ENCODE measurements at regions of chr1 and their contacts with region 1.

Region 1: DNA sequence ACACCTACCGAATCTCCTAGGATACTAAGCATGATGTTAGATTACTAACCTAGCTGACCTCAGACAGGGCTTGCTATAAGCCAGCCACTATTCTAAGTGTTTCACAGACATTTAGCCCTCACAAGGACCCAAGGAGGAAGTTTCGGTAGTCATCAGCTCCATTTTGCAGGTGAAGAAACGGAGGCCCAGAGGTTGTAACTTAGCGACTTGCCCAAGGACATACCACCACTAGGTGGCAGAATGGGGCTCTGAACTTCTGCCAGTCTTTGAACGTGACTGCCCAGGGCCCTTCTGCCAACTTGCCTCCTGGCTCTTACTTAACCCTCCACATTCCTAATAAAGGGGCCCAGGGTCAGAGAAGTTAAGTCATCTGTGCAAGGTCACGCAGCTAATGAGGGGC is 283.5 kb downstream of the C1orf94 start:
- DNase-seq: no peak
- ATAC-seq: no peak
- H3K4me3 Mint-ChIP-seq: no peak overlapping the region
- H3K27ac Mint-ChIP-seq: no peak overlapping the region
- H3K4me1 Mint-ChIP-seq: no peaks in the 10 kb centered on the region
- H3K27me3 Mint-ChIP-seq: peaks cover 2% of the 10 kb centered on the region
- CTCF ChIP-seq: no peak

Region 2: DNA sequence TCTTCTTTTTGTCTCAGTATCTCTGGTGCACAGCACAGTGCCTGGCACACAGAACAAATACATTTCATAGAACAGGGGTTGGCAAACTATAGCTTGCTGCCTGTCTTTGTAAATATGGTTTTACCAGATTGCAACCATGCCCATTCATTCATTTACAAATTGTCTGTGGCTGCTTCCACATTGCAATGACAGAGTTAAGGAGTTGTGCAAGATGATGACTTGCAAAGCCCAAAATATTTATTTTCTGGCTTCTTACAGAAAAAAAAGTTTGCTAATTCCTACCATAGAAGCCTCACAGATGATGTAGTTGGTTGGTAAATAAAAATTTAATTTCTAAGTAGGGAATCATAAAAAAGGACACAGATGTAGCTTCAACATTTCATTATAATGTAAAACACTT is 607.5 kb before region 1 on chr1:
- CTCF ChIA-PET with region 1: no interaction called
- POLR2A ChIA-PET with region 1: no interaction called
- intact Hi-C with region 1: no loop called
- DNase-seq: no peak
- ATAC-seq: no peak
- H3K4me3 Mint-ChIP-seq: no peak overlapping the region
- H3K27ac Mint-ChIP-seq: no peak overlapping the region
- H3K4me1 Mint-ChIP-seq: no peaks in the 10 kb centered on the region
- H3K27me3 Mint-ChIP-seq: peaks cover 5% of the 10 kb centered on the region
- CTCF ChIP-seq: no peak

Region 3: GRCh38 chr1:34426325-34426891 is 33.8 kb before region 1 on chr1:
- CTCF ChIA-PET with region 1: no interaction called
- POLR2A ChIA-PET with region 1: no interaction called
- intact Hi-C with region 1: no loop called
- DNase-seq: no peak
- ATAC-seq: no peak
- H3K4me3 Mint-ChIP-seq: no peak overlapping the region
- H3K27ac Mint-ChIP-seq: no peak overlapping the region
- H3K4me1 Mint-ChIP-seq: no peaks in the 10 kb centered on the region
- H3K27me3 Mint-ChIP-seq: peaks cover 10% of the 10 kb centered on the region
- CTCF ChIP-seq: no peak

Region 4: DNA sequence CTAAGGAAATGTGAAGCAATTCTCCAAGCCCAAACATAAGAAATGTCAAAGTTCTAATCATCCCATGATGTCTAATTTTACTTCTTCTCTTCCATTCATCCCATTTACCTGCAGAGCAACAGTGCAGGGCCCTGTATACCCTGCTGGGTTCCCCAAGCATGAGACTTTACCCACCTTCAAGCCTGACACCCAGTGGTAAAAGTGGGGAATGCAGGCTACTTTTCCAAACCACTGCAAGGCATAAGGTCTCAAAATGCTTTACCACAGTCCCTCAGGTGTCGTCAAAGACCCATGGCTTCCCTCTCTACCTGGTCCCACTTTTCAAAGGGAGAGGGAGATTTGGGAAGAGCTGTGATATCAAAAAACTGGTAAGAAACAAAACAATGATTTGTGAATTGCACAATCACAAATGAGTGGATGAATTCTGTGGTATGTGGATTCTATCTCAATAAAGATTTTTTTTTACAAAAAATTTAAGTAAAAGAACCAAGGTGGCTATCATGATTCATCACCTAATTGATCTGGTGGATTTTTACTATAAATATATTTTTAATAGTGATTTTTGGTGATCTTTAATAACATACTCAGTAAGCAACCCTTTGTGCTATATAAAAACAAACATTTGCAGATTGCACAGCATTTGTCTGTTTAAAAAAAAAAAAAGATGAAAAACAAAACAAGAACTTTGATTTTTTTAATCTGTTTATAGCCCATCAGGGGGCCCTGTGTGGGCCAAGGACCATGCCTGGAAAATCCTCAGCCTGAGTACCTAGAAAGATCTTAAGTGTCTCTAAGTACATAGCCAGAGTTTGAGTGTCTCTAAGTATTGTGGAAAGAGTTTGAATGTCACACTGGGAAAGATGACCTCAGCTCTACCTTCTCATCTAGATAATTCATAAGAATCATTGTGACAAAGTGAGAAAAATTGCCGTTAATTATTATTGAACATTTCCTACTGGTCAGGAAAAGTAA is 221.6 kb after region 1 on chr1:
- CTCF ChIA-PET with region 1: no interaction called
- POLR2A ChIA-PET with region 1: no interaction called
- intact Hi-C with region 1: loop called (anchors 2 kb)
- DNase-seq: no peak
- ATAC-seq: no peak
- H3K4me3 Mint-ChIP-seq: no peak overlapping the region
- H3K27ac Mint-ChIP-seq: no peak overlapping the region
- H3K4me1 Mint-ChIP-seq: no peaks in the 10 kb centered on the region
- H3K27me3 Mint-ChIP-seq: peaks cover 9% of the 10 kb centered on the region
- CTCF ChIP-seq: peak; percentile 21

Region 5: DNA sequence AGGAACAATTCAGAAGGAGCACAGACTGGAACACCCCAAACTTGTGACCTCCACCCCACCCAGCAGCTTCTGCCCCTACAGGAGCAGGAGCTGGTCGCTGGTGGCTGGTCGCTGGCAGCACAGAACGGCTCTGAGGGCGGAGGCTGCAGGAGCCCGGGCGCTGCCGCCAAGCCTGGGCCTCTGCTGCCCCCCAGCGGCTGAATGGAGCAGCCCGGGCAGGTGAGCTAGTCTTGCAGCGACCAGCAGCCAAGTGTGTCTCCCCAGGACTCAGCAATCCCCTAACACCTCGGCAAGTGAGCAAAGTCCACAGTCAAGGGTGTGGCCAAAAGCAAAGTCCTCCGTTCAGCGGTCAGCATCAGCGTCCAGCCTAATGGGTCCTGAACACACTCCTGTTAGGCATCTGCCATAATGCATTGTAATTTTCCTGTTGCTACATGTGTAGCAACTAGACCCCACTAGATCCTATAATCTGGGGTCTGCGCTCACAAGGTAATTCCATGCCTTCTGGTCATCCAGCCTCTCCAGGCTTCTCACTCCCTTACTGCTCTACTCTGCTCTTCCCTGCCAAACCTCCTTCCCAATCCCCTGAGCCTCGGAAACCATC is 282.6 kb after region 1 on chr1:
- CTCF ChIA-PET with region 1: interaction called, 15 read pairs
- POLR2A ChIA-PET with region 1: no interaction called
- intact Hi-C with region 1: no loop called
- DNase-seq: peak; percentile 76
- ATAC-seq: peak; percentile 80
- H3K4me3 Mint-ChIP-seq: no peak overlapping the region
- H3K27ac Mint-ChIP-seq: no peak overlapping the region
- H3K4me1 Mint-ChIP-seq: no peaks in the 10 kb centered on the region
- H3K27me3 Mint-ChIP-seq: peaks cover 15% of the 10 kb centered on the region
- CTCF ChIP-seq: no peak

Measured in activated B cell treated with CpG ODN at 0.5 μM for 24 hours (primary cell).